ENCODE measurements at regions of chr20 and their contacts with region 1.

Region 1: DNA sequence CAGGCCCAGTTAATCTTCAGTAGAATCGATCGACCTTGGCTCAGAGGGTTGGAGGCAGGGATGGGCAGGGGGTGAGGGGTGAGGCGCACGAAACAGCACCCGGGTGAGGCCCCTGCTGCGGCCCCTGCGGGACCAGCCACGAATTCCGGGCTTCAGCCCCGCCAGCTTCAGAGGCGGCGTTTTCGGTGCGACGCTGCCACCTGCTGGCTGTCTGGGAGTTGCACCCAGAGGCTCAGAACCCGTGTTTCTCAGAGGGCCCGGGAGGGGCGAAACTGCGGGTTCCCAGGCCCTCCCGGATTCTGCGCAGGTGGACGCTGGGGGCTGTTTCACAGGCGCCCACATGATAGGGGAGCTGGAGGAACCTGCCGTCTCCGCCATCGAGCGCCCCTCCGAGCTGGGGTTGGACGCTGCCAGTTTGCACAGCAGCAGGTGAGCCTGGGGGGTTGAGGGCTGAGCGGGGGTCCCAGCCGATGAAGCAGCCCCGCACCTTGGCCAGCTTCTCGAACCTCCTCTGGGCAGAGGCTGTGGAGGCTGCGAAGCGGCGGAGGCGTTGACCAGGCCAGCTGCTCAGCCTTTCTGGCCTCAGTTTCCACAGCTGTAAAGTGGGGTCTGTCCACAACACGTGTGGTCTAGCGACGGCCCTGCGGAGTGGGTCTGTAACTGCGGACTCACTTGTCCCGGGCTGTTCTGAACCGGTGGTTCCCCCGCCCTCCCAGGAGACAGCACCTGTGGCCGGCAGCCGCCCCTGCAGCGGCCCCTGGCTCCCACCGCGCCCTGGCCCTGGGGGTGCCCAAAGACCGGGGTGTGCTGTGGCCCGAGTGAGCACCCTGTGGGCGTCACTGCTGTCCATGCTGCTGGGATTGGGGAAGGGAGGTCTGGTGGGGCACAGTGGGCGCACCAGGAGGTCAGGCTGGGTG is 2.5 kb upstream of the BHLHE23 start:
- DNase-seq: peak; percentile 95
- H3K4me3 ChIP-seq: no peak overlapping the region; a peak in 1 of 4 replicates
- H3K27ac ChIP-seq: no peak overlapping the region
- H3K4me1 ChIP-seq: peaks cover 0 to 3% of the 10 kb centered on the region in 2 experiments; a peak in 1 of 4 replicates
- H3K27me3 ChIP-seq: peaks cover 92% of the 10 kb centered on the region
- CTCF ChIP-seq: peak; percentile 90
- EP300 ChIP-seq: no peak
- RAD21 ChIP-seq: peak; percentile 90

Region 2: GRCh38 chr20:62987155-62987554 is 22.1 kb before region 1 on chr20:
- CTCF ChIA-PET with region 1: interaction called, 13 read pairs
- POLR2A ChIA-PET with region 1: no interaction called
- DNase-seq: no peak
- H3K4me3 ChIP-seq: no peak overlapping the region
- H3K27ac ChIP-seq: no peak overlapping the region
- H3K4me1 ChIP-seq: no peaks in the 10 kb centered on the region
- H3K27me3 ChIP-seq: peaks cover 36% of the 10 kb centered on the region
- CTCF ChIP-seq: no peak
- EP300 ChIP-seq: no peak
- RAD21 ChIP-seq: no peak

Region 3: GRCh38 chr20:63025534-63026331 is 16.4 kb after region 1 on chr20:
- CTCF ChIA-PET with region 1: interaction called, 28 read pairs
- POLR2A ChIA-PET with region 1: interaction called, 3 read pairs
- DNase-seq: peak; percentile 65
- H3K4me3 ChIP-seq: peak overlapping the region in 1 of 2 experiments; percentile 3; a peak in 1 of 4 replicates
- H3K27ac ChIP-seq: no peak overlapping the region
- H3K4me1 ChIP-seq: no peaks in the 10 kb centered on the region; a peak in 1 of 4 replicates
- H3K27me3 ChIP-seq: peaks cover 76% of the 10 kb centered on the region
- CTCF ChIP-seq: no peak
- EP300 ChIP-seq: no peak
- RAD21 ChIP-seq: no peak

Region 4: GRCh38 chr20:63351811-63352591 is 342.7 kb after region 1 on chr20:
- CTCF ChIA-PET with region 1: no interaction called
- POLR2A ChIA-PET with region 1: no interaction called
- DNase-seq: peak; percentile 66
- H3K4me3 ChIP-seq: no peak overlapping the region
- H3K27ac ChIP-seq: no peak overlapping the region
- H3K4me1 ChIP-seq: no peaks in the 10 kb centered on the region; a peak in 1 of 4 replicates
- H3K27me3 ChIP-seq: no peaks in the 10 kb centered on the region
- CTCF ChIP-seq: no peak
- EP300 ChIP-seq: no peak
- RAD21 ChIP-seq: no peak

Measured in SK-N-SH (cell line).